Activated CD8-positive, alpha-beta memory T cell treated with anti-CD3 and anti-CD28 coated beads, Interleukin-2, amount 10 ng/mL, durations not matched to agents 7 days and 5 days (primary cell): ENCODE measurements at regions of chr15 and their contacts with region 1.

Region 1: GRCh38 chr15:43791993-43792760 is at the start of gene SERF2:
- DNase-seq: peak; percentile 100
- ATAC-seq: peak; percentile 96
- H3K4me3 Mint-ChIP-seq: peak within 1 kb of the TSS; percentile 98
- H3K27ac Mint-ChIP-seq: peak within 1 kb of the TSS; percentile 98
- H3K4me1 Mint-ChIP-seq: peaks cover 36% of the 10 kb centered on the region
- H3K27me3 Mint-ChIP-seq: no peaks in the 10 kb centered on the region
- total RNA-seq, gene SERF2: 804 to 808 TPM

Region 2: DNA sequence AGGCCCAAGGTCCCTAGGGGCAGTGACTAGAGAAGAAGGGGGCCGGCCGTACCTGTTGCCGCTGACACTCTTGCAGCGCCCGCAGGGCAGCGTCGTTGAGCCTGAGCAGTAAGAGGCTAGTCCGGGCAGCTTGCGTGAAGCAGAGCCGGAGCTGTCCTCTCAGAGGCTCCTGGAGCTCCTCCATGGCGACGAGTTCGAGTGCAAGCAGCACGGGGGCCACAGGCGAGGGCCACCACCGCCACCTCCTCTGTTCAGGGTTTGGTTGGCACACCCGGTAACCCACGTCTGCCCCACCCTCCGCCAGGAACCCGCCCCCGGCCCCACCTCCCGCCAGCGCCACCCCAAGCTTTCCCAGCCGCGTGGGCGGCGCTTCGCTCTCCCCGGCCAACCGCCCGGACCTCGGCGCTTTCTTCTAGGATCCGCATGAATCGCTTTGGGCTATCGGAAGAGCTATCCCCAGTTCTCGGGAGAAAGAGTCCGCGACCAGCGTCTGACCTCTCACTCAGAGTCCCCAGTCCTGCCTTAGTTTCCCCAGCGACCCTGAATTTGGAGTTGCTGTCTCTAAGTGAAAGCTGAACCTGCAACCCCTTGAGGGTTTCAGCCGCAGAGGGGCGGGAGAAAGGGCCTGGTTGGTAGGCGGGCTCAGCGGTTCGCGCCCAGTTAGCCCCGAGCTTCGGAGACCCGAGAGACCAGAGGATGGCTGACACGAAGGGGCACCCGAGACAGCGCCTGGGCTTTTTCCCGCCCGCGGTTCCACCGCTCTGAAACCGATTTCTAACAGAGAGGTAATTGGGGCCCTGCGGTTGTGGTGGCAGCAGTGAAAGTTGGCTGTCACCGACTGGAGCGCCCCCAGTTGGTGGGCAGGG is 15.2 kb before region 1 on chr15 and contains the start of gene ELL3:
- CTCF ChIA-PET with region 1: interaction called, 39 read pairs
- DNase-seq: peak; percentile 84
- ATAC-seq: peak; percentile 78
- H3K4me3 Mint-ChIP-seq: peak within 1 kb of the TSS; percentile 81
- H3K27ac Mint-ChIP-seq: peak within 1 kb of the TSS; percentile 80
- H3K4me1 Mint-ChIP-seq: peaks cover 19% of the 10 kb centered on the region
- H3K27me3 Mint-ChIP-seq: peaks cover 18% of the 10 kb centered on the region
- total RNA-seq, gene ELL3: 0.49 to 1.0 TPM

Region 3: DNA sequence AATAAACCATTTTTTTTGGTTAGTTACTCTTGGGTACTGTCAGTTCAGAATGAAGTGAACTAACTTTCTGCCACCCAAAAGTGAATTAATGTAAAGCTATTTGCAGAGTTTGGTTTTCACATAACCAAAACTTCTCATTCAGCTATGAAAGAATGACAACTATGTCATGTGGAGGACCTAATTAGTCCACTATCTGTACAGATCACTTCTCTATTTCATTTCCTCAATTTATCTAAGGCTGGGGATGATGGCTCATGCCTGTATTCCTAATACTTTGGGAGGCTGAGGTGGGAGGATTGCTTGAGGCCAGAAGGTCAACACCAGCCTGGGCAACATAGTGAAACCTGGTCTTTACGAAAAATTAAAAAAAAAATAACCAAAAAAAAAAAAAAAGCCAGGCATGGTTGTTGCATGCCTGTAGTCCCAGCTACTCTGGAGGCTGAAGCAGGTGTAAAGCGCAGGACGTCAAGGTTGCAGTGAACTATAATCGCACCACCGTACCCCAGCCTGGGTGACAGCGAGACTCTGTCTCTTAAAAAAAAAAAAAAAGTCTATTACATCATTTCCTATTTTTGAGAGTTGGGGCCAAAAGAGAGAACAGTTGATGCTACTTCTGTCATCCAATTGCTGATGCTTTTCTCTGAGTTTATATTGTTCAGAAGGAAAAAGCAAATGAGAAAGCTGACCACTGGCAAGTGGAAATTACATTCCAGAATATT is 16.9 kb after region 1 on chr15:
- CTCF ChIA-PET with region 1: no interaction called
- DNase-seq: no peak
- ATAC-seq: no peak
- H3K4me3 Mint-ChIP-seq: no peak overlapping the region
- H3K27ac Mint-ChIP-seq: no peak overlapping the region
- H3K4me1 Mint-ChIP-seq: peaks cover 6% of the 10 kb centered on the region
- H3K27me3 Mint-ChIP-seq: no peaks in the 10 kb centered on the region

Region 4: DNA sequence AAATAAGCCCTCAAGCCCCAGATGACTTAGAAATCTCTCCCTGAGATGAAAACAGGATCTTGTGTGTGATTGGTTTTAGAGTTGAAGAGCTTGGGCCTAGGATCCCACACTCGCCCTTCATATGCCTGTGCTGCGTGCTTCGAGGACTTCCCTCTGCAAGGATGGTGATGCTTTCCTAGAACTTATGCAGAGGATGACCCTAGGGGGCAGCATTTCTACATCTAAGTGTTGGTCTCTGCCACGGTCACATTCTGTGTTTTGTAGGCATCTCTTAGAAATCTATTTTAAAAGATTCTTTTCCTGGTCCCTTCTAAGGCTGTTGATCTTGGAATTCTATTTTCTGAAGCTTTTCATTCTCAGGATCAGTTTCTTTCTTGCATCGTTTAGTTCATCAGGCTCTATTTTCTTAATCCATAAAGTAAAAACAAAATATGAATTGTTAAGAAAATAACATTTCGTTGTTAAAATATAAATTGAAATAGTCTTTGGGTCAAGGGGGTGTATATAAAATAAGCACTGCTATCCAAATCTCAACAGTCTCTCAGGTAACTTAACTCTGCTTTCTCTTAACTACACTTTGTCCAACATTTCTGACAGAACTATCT is 80.3 kb after region 1 on chr15:
- CTCF ChIA-PET with region 1: no interaction called
- DNase-seq: no peak
- ATAC-seq: no peak
- H3K4me3 Mint-ChIP-seq: no peak overlapping the region
- H3K27ac Mint-ChIP-seq: no peak overlapping the region
- H3K4me1 Mint-ChIP-seq: peaks cover under 1% of the 10 kb centered on the region
- H3K27me3 Mint-ChIP-seq: no peaks in the 10 kb centered on the region